Activated naive CD8-positive, alpha-beta T cell treated with anti-CD3 and anti-CD28 coated beads, Interleukin-2, amount 10 ng/mL, durations not matched to agents 7 days and 5 days (primary cell): ENCODE measurements at regions of chr12 and their contacts with region 1.

Region 1: DNA sequence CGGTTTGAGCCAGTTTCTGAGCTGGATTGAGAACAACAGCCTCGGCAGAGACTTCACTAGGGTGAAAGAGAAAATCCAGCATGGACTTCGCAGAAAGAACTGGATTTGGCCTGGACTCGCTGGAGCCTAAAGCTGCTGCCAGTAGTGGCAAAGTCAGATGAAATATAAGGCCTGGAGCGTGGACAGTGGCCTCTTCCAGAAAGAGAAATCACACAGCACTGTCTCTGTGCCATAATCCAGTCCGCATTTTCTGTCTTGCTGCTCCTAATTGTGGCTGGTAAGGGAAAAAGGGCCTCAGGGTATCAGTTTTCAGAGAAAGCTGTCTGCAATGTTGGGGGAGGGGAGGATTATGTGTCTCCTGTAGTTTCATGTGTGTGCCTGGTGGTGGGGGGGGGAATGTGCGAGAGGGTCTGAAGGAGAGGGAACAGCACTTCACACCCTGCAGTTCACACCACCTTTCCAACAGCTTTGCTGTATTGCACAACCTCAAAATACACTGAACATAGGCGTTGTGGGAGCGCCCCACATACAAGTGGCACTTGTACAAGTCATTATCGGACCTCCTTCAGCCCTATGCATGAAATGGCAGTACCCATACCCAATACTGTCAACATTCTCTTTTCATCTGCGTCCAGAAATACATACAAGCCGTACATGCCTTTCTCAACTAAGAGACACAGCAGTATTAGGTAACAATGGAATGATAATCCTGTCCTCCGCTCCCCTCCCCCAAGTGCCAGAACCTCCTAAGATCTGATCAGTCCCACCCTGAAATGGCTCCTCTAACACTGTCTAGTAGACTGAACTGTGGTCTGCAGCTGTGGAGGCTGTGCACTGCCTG is 107.5 kb upstream of the ATF7IP start:
- DNase-seq: peak; percentile 74
- ATAC-seq: peak; percentile 82
- H3K4me3 Mint-ChIP-seq: peak overlapping the region; percentile 74
- H3K27ac Mint-ChIP-seq: peak overlapping the region; percentile 97
- H3K4me1 Mint-ChIP-seq: peaks cover 37% of the 10 kb centered on the region
- H3K27me3 Mint-ChIP-seq: no peaks in the 10 kb centered on the region

Region 2: DNA sequence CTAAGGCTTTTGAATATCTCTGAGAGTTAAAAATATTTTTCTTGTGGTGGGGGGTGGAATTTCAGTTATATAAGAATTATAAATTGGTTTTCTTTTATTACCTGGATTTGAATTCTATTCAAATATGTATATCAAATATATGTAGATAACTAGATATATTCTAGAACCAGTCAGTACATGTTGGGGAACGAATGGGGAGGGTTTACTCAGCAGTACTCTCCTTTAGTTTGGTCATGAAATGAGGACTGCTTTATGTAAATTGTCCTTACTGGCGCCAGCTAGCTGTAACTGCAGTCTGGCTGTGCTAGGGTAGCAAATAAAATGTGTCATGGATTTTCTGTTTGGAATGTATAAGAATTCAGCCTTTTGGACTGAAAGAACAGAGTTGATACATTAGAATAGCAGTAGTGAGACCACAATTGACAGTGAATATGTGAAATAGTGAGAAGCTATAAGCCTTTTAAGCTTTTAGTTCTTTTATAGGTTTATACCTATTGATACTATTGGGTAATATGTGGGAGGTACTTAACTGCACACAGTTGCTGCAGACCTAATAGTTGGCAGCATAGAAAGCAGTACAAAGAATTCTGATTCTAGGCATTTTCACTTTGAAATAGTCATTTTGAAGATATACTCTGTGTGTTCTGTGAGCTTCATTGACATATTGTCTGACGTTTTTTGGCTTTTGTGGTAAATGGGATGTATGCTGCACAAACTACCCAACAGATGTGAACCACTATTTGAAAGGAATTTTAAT is 136.5 kb after region 1 on chr12:
- POLR2A ChIA-PET with region 1: interaction called, 24 read pairs
- DNase-seq: no peak
- ATAC-seq: peak; percentile 76
- H3K4me3 Mint-ChIP-seq: peak overlapping the region; percentile 83
- H3K27ac Mint-ChIP-seq: peak overlapping the region; percentile 89
- H3K4me1 Mint-ChIP-seq: peaks cover 61% of the 10 kb centered on the region
- H3K27me3 Mint-ChIP-seq: no peaks in the 10 kb centered on the region